MCF 10A (cell line): ENCODE measurements at regions of chr9 and their contacts with region 1.

Region 1: DNA sequence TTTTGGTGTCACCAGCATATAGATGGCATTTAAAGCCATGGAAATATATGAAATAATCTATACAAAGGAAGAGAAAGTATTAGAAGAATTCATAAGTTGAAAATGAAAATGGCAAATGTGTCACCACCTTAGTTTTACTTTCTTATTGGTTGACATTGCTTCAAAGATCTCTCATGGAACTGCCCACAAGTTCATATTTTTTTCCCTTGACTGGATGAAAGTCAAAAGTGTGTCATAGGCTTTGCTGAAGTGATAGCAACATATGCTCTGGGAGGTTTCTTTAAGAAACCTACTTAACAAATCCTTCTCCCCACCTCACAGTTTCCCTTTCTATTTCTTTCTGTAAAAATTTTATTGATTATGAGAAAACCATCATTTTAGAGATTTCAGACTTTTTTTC is 127.2 kb downstream of the VPS13A start:
- DNase-seq: no peak
- H3K4me3 Mint-ChIP-seq: no peak overlapping the region
- H3K27ac Mint-ChIP-seq: peak overlapping the region; percentile 61
- H3K4me1 Mint-ChIP-seq: peaks cover 22% of the 10 kb centered on the region
- H3K27me3 Mint-ChIP-seq: no peaks in the 10 kb centered on the region
- CTCF ChIP-seq: no peak

Region 2: GRCh38 chr9:76943054-76943453 is 361.5 kb before region 1 on chr9:
- CTCF ChIA-PET with region 1: no interaction called
- POLR2A ChIA-PET with region 1: no interaction called
- intact Hi-C with region 1: no loop called
- DNase-seq: no peak
- H3K4me3 Mint-ChIP-seq: no peak overlapping the region
- H3K27ac Mint-ChIP-seq: no peak overlapping the region
- H3K4me1 Mint-ChIP-seq: no peaks in the 10 kb centered on the region
- H3K27me3 Mint-ChIP-seq: no peaks in the 10 kb centered on the region
- CTCF ChIP-seq: no peak

Region 3: DNA sequence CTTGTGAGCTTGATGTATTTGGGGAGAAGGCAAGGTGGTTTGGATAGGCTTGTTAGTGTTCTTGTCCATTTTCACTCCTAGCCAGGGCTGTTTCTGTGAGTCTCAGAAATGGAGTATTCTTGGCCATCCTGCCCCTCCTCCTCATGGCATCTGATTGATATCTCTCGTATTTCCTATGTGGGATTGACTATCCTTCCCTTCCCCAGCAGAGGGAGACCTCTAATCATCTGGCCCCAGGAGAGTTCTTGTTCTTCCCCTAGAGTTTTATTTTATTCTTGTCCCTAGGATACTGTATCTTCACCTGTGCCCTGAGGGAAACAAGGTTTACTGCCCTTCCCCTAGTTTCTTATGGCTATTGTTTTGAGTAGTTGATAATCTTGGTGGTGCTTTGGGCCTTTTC is 12.8 kb before region 1 on chr9:
- CTCF ChIA-PET with region 1: interaction called, 41 read pairs
- POLR2A ChIA-PET with region 1: interaction called, 19 read pairs
- intact Hi-C with region 1: no loop called
- DNase-seq: peak; percentile 65
- H3K4me3 Mint-ChIP-seq: no peak overlapping the region
- H3K27ac Mint-ChIP-seq: peak overlapping the region; percentile 2
- H3K4me1 Mint-ChIP-seq: peaks cover 19% of the 10 kb centered on the region
- H3K27me3 Mint-ChIP-seq: no peaks in the 10 kb centered on the region
- CTCF ChIP-seq: peak; percentile 53